ENCODE measurements at regions of chr15 and their contacts with region 1.

Region 1: GRCh38 chr15:101121511-101122090 is 130.2 kb downstream of the CHSY1 start:
- DNase-seq: peak; percentile 51 to 75 (median 64)
- H3K4me3 ChIP-seq: peak overlapping the region in 5 of 7 experiments; percentile 55 to 81 (median 62)
- H3K27ac ChIP-seq: peak overlapping the region; percentile 49 to 77
- H3K4me1 ChIP-seq: peaks cover 19 to 68% (median 58%) of the 10 kb centered on the region in 4 experiments
- H3K27me3 ChIP-seq: no peaks in the 10 kb centered on the region

Region 2: GRCh38 chr15:101088788-101089583 is 32.6 kb before region 1 on chr15:
- CTCF ChIA-PET with region 1: interaction called, 31 read pairs
- POLR2A ChIA-PET with region 1: no interaction called
- DNase-seq: peak; percentile 57 to 70 (median 67)
- H3K4me3 ChIP-seq: peak overlapping the region in 3 of 7 experiments; percentile 33 to 60 (median 42)
- H3K27ac ChIP-seq: no peak overlapping the region
- H3K4me1 ChIP-seq: peaks cover 5 to 38% (median 34%) of the 10 kb centered on the region in 4 experiments
- H3K27me3 ChIP-seq: no peaks in the 10 kb centered on the region

Region 3: DNA sequence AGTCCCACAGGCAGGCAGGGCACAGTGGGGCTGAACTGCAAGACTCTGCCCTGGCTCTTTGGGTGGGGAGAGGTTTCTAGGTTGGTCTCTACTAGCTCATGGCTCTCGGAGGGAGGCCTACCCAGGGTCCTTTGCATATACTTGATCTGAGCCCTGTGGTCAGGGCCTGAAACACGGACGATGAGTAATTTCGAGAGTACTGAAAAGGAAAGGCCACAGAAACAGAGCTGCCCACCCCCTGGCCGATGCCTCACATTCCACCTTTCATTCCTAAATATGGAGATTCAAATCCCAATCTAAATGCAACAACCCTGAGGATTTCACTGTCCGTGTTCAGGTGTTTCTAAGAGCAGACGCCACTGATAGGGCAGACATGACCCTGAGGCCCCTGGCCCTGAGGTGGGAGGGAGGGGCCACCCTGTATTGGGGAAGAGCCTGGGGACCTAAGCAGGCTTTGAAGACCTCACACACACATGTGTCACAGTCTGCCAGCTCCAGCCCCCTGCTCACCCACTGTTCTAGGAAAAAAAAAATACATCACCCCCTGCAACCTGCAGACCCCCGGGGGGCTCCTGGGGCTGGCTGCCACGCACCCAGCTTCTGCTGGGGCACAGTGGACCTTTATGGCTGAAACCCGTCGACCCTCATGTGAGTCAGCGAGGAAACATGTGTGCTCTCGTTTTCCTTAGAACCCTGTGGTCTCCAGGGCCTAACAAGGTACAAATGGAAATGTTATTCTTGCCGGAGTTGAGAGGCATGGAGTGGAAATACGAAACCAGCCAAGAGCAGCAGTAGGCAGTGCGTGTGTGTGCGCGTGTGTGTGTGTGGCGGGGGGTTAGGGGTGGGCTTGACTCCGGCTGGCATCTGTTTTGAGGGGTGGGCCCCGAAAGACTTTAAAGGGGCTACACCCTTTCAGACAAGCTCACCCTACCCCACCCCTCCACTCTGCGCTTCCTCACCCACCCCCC is 17.6 kb after region 1 on chr15:
- CTCF ChIA-PET with region 1: interaction called, 32 read pairs
- POLR2A ChIA-PET with region 1: interaction called, 6 read pairs
- DNase-seq: peak in 2 of 3 donors; percentile 53 to 62
- H3K4me3 ChIP-seq: no peak overlapping the region
- H3K27ac ChIP-seq: no peak overlapping the region
- H3K4me1 ChIP-seq: peaks cover 0 to 60% (median 47%) of the 10 kb centered on the region in 4 experiments
- H3K27me3 ChIP-seq: no peaks in the 10 kb centered on the region

Region 4: GRCh38 chr15:101258238-101259144 is 136.9 kb after region 1 on chr15:
- CTCF ChIA-PET with region 1: interaction called, 15 read pairs
- POLR2A ChIA-PET with region 1: interaction called, 3 read pairs
- DNase-seq: peak; percentile 74 to 81 (median 75)
- H3K4me3 ChIP-seq: no peak overlapping the region
- H3K27ac ChIP-seq: no peak overlapping the region
- H3K4me1 ChIP-seq: peaks cover 4 to 31% (median 24%) of the 10 kb centered on the region in 4 experiments
- H3K27me3 ChIP-seq: no peaks in the 10 kb centered on the region

Region 5: DNA sequence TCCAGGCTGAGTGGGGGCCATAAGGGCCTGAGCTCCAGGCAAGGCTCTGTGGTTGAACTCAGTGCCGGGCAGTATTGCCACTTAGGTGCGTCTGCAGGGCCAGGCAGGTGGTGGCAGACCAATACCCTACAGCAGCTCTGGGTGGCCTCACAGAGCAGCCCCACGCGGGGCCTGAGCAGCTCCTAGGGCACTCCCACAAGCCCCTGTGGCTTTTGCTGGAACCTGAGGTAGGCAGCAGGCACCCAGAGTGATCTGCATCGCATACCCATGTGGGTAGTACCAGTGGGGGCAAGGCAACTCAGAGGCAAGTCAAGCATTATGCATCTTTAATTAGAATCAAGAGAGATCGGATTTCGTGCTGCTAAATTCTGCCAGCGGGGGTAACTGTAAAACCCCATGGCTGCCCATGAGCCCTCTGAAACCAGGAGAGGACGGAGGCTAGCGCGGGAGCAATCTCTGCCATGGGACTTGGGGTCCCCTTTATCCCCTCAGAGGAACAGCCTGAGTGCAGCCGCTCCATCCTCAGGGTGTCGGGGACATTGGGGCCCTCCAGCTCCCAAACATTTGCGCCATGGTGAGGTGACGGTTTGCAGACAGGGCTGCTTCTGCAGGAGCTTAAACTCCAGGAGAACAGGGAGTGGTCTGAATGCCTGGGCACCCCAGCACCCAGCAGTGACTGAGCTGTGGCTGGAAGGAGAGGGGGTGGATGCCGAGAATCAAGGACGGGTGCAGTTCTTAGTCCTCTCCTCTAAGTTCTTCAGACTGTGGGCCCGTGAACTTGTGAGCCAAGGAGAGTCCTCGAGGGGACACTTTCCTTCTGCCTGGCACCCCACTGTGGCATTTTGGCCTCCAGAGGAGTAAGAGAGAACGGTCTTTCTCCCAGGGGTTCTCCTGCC is 430.3 kb after region 1 on chr15:
- CTCF ChIA-PET with region 1: no interaction called
- POLR2A ChIA-PET with region 1: no interaction called
- DNase-seq: no peak
- H3K4me3 ChIP-seq: no peak overlapping the region
- H3K27ac ChIP-seq: no peak overlapping the region
- H3K4me1 ChIP-seq: no peaks in the 10 kb centered on the region
- H3K27me3 ChIP-seq: peaks cover 0 to 38% (median 11%) of the 10 kb centered on the region in 5 experiments